GM10248 (cell line): ENCODE measurements at regions of chr12 and their contacts with region 1.

Region 1: GRCh38 chr12:47837190-47838171 is 17.8 kb upstream of the HDAC7 start:
- DNase-seq: peak; percentile 69
- CTCF ChIP-seq: peak; percentile 90

Region 2: DNA sequence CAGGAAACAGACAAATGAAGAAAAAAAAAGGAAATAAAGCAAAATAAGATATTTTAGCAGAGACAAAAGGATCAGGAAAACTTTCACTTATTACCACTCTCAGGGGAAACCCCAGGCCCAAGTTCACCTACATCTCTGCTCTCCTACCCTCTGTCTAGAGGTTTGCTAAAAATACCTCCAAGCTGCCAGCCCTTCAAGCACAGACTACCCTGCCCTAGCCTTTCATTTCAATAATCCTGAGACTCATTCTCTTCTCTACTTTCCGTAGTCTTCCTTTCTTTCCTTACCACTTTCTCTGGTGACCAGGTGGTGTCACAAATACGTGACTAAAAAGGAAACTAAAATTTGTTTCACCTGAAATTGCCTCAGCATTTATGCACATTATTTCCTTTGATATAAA is 165.4 kb before region 1 on chr12:
- CTCF ChIA-PET with region 1: no interaction called
- POLR2A ChIA-PET with region 1: no interaction called
- DNase-seq: no peak
- CTCF ChIP-seq: no peak

Region 3: DNA sequence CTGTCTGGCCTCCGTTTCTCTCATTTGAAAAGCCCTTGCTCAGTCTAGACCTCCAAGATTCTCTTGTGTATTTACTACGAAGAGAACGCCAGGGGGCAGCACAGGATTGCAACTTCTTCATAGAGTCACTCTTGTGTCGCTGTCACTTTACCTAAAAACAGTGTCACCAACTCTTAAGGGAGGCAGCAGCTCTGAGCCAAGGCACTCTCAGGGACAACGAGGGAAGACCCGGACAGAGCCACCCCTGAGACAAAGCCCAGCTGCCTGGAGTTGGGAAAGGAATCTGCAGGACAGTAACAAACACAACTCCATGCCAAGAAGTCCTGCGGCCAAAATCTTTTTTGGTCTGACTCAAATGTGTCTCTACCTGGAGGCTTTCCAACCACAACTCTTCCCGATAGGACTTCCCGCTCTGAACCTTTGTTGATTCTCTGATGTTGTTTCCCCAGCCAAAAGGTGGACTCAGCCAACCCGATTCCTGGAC is 122.0 kb before region 1 on chr12:
- CTCF ChIA-PET with region 1: interaction called, 33 read pairs
- POLR2A ChIA-PET with region 1: no interaction called
- DNase-seq: peak; percentile 77
- CTCF ChIP-seq: peak; percentile 83

Region 4: GRCh38 chr12:47758834-47759690 is 78.4 kb before region 1 on chr12 and contains the start of gene RAPGEF3:
- CTCF ChIA-PET with region 1: interaction called, 24 read pairs
- POLR2A ChIA-PET with region 1: interaction called, 5 read pairs
- DNase-seq: peak; percentile 86
- CTCF ChIP-seq: peak; percentile 68

Region 5: DNA sequence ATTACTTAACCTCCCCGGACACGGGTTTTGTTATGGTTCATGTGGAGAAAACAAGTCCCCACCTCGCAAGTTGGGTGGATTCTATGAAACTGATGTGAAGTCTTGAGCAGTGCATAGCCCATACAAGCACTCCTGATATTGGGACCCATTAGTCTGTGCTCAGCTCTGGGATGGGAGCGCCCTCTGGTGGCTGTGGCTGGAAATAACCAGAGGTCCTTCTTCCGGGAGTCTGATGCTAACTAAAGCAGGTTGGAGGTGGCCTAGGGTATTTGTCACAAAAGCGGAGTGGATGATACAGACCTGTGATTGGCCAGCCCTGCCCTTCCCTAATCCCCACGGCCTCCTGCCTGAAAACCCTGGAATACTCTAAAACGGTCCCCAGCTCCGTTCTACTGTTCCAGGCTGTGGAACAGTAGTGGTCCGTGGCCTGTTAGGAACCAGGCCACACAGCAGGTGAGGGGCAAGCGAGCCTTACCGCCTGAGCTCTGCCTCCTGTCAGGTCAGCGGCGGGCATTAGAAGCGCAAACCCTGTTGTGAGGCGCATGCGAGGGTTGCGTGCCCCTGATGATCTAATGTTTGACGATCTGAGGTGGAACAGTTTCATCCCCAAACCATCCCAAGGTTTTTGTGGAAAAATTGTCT is 58.1 kb before region 1 on chr12:
- CTCF ChIA-PET with region 1: interaction called, 685 read pairs
- POLR2A ChIA-PET with region 1: no interaction called
- DNase-seq: peak; percentile 90
- CTCF ChIP-seq: peak; percentile 96

Region 6: DNA sequence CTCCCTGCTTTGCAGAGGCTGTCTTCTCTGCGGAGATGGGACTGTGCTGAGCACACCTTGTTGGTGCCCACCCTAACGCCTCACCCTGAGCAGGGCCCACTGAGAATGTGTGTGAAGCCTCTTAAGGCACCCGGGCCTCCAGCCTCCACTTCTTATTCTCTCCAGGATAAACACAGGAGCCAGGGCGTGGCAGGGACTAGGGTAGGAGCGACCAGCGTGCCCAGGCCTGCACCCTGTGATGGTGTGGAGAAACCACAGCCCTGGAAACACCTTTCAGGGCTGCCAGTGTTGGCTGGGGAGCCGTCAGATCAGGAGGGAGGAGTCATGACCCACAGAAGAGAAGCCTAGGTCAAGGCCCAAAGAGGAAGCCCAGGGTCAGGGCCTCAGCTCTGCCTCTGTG is 26.0 kb after region 1 on chr12:
- CTCF ChIA-PET with region 1: interaction called, 42 read pairs
- POLR2A ChIA-PET with region 1: no interaction called
- DNase-seq: no peak
- CTCF ChIP-seq: no peak

Region 7: DNA sequence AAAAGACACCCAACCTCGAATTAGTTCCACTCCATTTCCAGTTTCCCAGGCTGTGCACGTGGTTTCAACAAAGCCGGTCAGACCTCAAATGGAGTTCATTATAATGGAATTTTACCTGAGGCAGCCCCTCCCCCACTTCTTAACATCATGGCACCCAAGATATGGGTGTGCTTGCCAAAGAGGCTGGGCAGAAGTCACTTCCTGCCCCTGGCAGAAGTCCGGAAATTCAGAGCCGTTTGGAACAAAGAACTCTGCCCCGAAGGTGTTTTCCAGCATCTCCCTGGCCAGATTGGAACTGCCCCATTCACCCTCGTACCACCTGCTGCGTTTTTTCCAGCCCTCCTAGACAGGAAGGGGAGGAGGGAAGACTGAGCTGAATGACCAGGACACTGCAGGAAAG is 59.2 kb after region 1 on chr12:
- CTCF ChIA-PET with region 1: interaction called, 15 read pairs
- POLR2A ChIA-PET with region 1: no interaction called
- DNase-seq: no peak
- CTCF ChIP-seq: no peak